HEK293 (cell line): ENCODE measurements at regions of chr11 and their contacts with region 1.

Region 1: GRCh38 chr11:33970984-33971466 is 79.1 kb upstream of the LMO2 start:
- H3K4me3 ChIP-seq: no peak overlapping the region
- H3K27ac ChIP-seq: no peak overlapping the region
- H3K4me1 ChIP-seq: no peaks in the 10 kb centered on the region
- CTCF ChIP-seq: peak; percentile 37; the same call in 1 of the 2 replicates

Region 2: DNA sequence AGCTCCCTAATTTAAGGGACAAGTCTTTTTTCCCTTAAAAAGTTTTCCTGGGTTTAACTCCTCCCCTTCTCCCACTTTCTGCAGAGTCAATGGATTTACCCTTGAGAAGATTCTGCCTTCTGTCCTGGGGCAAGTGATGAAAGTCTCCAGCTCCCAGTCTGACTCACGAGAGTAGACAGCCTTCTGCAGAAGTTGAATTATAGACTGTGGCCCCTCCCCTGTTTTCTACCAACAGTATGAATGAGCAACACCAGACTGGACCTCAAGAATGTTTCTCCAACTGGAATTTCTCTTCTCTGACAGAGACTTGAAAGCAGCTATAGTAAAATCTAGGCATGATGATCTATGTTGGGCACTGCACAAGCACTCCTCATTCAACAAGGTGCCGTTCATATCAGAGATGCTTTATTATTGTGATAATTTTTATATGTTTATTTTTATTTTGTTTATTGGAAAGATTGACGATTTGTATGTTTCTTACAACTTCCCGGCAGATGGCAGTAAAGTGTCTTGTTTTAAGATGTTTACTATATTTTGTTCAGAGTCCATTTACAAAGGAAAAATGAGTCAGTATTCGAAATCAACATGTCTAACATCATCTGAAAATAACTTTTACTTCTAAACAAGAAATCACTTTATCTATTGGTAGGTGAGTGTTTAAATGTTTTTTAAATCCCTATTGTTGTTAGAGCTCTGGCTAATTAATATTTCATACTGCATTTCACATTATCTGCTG is 135.7 kb before region 1 on chr11:
- CTCF ChIA-PET with region 1: interaction called, 27 read pairs
- POLR2A ChIA-PET with region 1: no interaction called
- H3K4me3 ChIP-seq: no peak overlapping the region
- H3K27ac ChIP-seq: no peak overlapping the region
- H3K4me1 ChIP-seq: no peaks in the 10 kb centered on the region
- CTCF ChIP-seq: no peak

Region 3: GRCh38 chr11:33863418-33864172 is 107.4 kb before region 1 on chr11:
- CTCF ChIA-PET with region 1: interaction called, 55 read pairs
- POLR2A ChIA-PET with region 1: no interaction called
- H3K4me3 ChIP-seq: no peak overlapping the region
- H3K27ac ChIP-seq: no peak overlapping the region
- H3K4me1 ChIP-seq: no peaks in the 10 kb centered on the region
- CTCF ChIP-seq: no peak